ENCODE measurements at regions of chr13 and their contacts with region 1.

Region 1: GRCh38 chr13:36193151-36193855 is 21.1 kb downstream of the SOHLH2 start:
- DNase-seq: no peak
- H3K4me3 ChIP-seq: no peak overlapping the region
- H3K27ac ChIP-seq: no peak overlapping the region
- H3K4me1 ChIP-seq: no peaks in the 10 kb centered on the region
- H3K27me3 ChIP-seq: no peaks in the 10 kb centered on the region
- CTCF ChIP-seq: no peak
- EP300 ChIP-seq: no peak
- POLR2A ChIP-seq: no peak

Region 2: GRCh38 chr13:34681405-34681955 is 1511.8 kb before region 1 on chr13:
- intact Hi-C with region 1: loop called in 1 of 4 experiments (anchors 5 kb)
- DNase-seq: no peak
- H3K4me3 ChIP-seq: no peak overlapping the region
- H3K27ac ChIP-seq: no peak overlapping the region
- H3K4me1 ChIP-seq: no peaks in the 10 kb centered on the region
- H3K27me3 ChIP-seq: no peaks in the 10 kb centered on the region
- CTCF ChIP-seq: no peak
- EP300 ChIP-seq: no peak
- POLR2A ChIP-seq: no peak

Region 3: GRCh38 chr13:36887758-36888521 is 694.6 kb after region 1 on chr13:
- intact Hi-C with region 1: no loop called
- DNase-seq: no peak
- H3K4me3 ChIP-seq: no peak overlapping the region
- H3K27ac ChIP-seq: no peak overlapping the region
- H3K4me1 ChIP-seq: peaks cover 7% of the 10 kb centered on the region
- H3K27me3 ChIP-seq: no peaks in the 10 kb centered on the region
- CTCF ChIP-seq: no peak
- EP300 ChIP-seq: no peak
- POLR2A ChIP-seq: no peak

Measured in ovary (tissue), 10 donors.